ENCODE measurements at regions of chr10 and their contacts with region 1.

Region 1: DNA sequence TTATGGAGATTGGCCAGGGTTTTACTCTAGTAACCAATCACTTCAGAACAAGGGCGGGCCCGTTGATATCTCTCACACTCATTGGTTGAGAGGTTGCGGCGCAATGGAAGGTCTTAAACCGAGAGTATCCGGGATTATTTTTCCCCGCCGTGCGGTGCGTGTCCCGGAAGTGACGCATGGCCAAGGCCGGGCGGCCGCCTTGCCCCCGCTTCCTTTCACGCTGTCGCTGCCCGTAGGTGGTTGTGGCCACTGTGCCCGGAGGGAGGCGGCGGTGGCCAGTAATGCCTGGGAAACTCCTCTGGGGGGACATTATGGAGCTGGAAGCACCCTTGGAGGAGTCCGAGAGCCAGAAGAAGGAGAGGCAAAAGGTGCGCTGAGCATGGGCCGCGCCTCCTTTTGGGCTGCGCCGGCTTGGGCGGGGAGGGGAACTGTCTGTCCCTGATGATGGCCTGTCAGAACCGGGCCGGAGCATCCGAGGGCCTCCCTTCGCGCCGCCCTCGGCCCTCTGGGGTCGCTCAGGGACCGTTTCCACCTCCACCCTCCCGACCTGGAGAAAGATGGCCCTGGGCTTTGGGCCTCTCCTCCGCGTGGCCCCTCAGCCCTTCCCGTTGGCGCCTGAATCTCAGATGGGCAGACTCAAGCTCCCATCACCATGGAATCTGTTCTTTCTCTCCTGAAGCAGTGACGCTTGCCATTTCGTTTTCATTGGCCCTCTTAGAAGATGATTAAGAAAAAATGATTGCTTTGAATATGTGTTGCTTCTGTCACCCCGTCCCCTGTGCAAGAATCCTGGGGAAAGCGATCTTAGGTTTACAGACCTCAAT is at the start of gene DDX50:
- DNase-seq: peak; percentile 96 to 98 (median 98)
- ATAC-seq: peak; percentile 98 to 99 (median 98)
- H3K4me3 ChIP-seq: peak within 1 kb of the TSS; percentile 39 to 98 (median 85)
- H3K27ac ChIP-seq: peak within 1 kb of the TSS; percentile 95 to 100 (median 99)
- H3K4me1 ChIP-seq: peaks cover 0 to 37% (median 20%) of the 10 kb centered on the region in 12 donors
- H3K27me3 ChIP-seq: no peaks in the 10 kb centered on the region
- CTCF ChIP-seq: peak in 3 of 12 donors; percentile 14 to 31 (median 15)
- POLR2A ChIP-seq: peak in 1 of 2 donors; percentile 35
- total RNA-seq, gene DDX50: 14.0 to 26.9 (median 20.2) TPM

Region 2: DNA sequence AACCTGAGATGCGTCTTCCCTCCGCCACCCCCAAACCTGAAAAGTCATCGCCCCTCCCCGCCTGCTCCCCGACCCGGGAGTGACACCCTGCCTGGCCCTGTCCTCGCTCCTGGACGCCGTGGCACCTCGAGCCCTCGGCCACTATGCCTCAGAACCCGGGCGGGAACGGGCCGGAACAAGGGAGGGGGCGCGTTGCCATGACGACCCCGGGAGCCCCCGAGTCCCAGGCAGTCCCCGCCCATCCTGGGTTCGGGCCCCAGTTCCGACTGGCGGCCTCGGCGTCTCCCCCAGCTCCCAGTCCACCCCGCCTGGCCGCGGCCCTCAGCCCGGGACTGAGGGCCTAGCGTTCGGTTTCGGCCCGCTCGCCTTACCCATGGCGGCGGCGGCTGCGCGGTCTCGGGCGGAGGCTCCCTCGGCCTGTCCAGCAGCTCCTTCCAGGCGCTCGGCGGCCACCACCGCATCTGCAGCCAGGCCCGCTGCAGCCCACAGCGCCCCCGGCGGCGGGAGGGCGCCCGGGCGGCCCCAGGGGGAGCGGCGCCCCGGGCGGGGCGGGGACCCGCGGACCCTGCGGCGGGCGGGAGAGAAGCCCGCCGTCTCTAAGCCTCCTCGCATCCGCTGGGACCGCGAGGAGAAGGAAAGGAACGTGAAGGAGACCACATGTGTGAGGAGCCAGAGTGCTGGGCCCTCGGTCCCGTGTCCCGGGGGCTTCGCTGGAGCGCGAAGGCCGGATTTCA is 494.3 kb before region 1 on chr10 and contains the start of gene RUFY2:
- intact Hi-C with region 1: loop called in 1 of 10 experiments (anchors 10 kb)
- DNase-seq: peak; percentile 79 to 91 (median 82)
- ATAC-seq: peak; percentile 79 to 98 (median 96)
- H3K4me3 ChIP-seq: peak within 1 kb of the TSS; percentile 69 to 100 (median 96)
- H3K27ac ChIP-seq: peak within 1 kb of the TSS; percentile 86 to 96 (median 93)
- H3K4me1 ChIP-seq: peaks cover 0 to 30% (median 6%) of the 10 kb centered on the region in 12 donors
- H3K27me3 ChIP-seq: no peaks in the 10 kb centered on the region
- CTCF ChIP-seq: peak in 11 of 12 donors; percentile 21 to 100 (median 80)
- POLR2A ChIP-seq: peak in 1 of 2 donors; percentile 61
- total RNA-seq, gene RUFY2: 5.6 to 11.8 (median 8.9) TPM

Region 3: GRCh38 chr10:68550747-68551411 is 350.4 kb before region 1 on chr10:
- intact Hi-C with region 1: loop called in 3 of 10 experiments (anchors 5 kb)
- DNase-seq: peak in 3 of 5 donors; percentile 30 to 43 (median 36)
- ATAC-seq: peak in 3 of 4 donors; percentile 72 to 87 (median 74)
- H3K4me3 ChIP-seq: no peak overlapping the region
- H3K27ac ChIP-seq: no peak overlapping the region
- H3K4me1 ChIP-seq: no peaks in the 10 kb centered on the region
- H3K27me3 ChIP-seq: no peaks in the 10 kb centered on the region
- CTCF ChIP-seq: peak; percentile 64 to 86 (median 76)
- POLR2A ChIP-seq: no peak

Region 4: DNA sequence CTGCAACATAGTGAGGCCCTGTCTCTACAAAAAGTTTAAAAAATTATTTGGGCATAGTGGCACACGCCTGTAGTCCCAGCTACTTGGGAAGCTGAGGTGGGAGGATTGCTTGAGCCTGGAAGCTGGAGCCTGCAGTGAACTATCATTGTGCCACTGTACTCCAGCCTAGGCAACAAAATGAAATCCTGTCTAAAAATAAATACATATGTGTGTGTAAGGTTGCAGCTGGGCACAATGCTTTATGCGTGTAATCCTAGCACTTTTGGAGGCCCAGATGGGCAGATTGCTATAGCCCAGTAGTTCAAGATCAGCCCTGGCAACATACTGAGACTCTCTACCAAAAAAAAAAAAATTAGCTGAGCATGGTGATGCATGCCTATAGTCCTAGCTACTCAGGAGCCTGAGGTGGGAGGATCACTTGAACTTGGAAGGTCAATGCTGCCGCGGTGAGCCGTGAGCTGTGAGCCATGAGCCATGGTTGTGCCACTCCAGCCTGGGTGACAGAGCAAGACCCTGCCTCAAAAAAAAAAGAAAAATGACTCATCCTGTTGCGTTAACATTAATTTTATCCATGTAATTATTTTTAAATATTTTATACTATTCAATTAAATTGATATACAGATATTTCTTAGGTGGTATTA is 142.0 kb before region 1 on chr10:
- intact Hi-C with region 1: no loop called
- DNase-seq: no peak
- ATAC-seq: no peak
- H3K4me3 ChIP-seq: no peak overlapping the region
- H3K27ac ChIP-seq: no peak overlapping the region
- H3K4me1 ChIP-seq: no peaks in the 10 kb centered on the region
- H3K27me3 ChIP-seq: no peaks in the 10 kb centered on the region
- CTCF ChIP-seq: no peak
- POLR2A ChIP-seq: no peak

Region 5: GRCh38 chr10:68792115-68792514 is 109.2 kb before region 1 on chr10:
- intact Hi-C with region 1: loop called in 9 of 10 experiments (anchors 2 to 10 kb)
- DNase-seq: no peak
- ATAC-seq: no peak
- H3K4me3 ChIP-seq: no peak overlapping the region
- H3K27ac ChIP-seq: no peak overlapping the region
- H3K4me1 ChIP-seq: no peaks in the 10 kb centered on the region
- H3K27me3 ChIP-seq: no peaks in the 10 kb centered on the region
- CTCF ChIP-seq: peak in 6 of 12 donors; percentile 12 to 27 (median 16)
- POLR2A ChIP-seq: no peak

Region 6: DNA sequence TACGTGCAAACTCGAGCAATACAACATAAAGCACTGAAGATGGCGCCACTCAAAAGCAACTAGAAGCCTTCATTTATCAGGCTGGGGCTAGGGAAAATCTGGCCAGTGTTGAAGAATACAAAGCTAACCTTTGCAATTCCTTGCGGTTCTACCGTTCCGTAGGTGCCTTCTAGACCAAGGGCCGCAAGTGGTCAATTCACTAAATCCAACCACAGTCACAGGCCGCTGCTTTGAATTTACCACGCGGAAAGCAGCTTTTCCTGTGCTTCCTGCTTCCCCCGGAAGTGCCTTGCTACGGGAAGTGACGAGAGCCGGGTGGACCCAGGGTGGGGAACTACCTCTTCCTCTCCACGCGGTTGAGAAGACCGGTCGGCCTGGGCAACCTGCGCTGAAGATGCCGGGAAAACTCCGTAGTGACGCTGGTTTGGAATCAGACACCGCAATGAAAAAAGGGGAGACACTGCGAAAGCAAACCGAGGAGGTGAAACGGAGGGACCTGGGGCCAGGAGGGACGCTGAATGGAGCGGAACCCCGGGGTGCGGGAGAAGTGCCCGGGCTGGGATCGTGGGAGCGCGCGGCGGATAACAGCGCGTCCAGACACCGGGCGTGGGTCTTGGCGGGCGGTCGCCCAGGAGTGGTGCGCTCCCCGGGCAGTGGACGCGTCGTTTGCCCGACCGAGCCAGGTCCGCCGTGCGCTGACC is 54.7 kb after region 1 on chr10 and contains the start of gene DDX21:
- intact Hi-C with region 1: loop called in 1 of 10 experiments (anchors 2 kb)
- DNase-seq: peak; percentile 91 to 94 (median 91)
- ATAC-seq: peak; percentile 97 to 98 (median 98)
- H3K4me3 ChIP-seq: peak within 1 kb of the TSS; percentile 51 to 96 (median 88)
- H3K27ac ChIP-seq: peak within 1 kb of the TSS; percentile 35 to 97 (median 84)
- H3K4me1 ChIP-seq: peaks cover 4 to 44% (median 21%) of the 10 kb centered on the region in 12 donors
- H3K27me3 ChIP-seq: no peaks in the 10 kb centered on the region
- CTCF ChIP-seq: peak; percentile 26 to 74 (median 56)
- POLR2A ChIP-seq: peak in 1 of 2 donors; percentile 52
- total RNA-seq, gene DDX21: 18.5 to 37.9 (median 26.2) TPM

Measured in heart left ventricle (tissue), 16 donors.